ENCODE measurements at regions of chr9 and their contacts with region 1.

Region 1: DNA sequence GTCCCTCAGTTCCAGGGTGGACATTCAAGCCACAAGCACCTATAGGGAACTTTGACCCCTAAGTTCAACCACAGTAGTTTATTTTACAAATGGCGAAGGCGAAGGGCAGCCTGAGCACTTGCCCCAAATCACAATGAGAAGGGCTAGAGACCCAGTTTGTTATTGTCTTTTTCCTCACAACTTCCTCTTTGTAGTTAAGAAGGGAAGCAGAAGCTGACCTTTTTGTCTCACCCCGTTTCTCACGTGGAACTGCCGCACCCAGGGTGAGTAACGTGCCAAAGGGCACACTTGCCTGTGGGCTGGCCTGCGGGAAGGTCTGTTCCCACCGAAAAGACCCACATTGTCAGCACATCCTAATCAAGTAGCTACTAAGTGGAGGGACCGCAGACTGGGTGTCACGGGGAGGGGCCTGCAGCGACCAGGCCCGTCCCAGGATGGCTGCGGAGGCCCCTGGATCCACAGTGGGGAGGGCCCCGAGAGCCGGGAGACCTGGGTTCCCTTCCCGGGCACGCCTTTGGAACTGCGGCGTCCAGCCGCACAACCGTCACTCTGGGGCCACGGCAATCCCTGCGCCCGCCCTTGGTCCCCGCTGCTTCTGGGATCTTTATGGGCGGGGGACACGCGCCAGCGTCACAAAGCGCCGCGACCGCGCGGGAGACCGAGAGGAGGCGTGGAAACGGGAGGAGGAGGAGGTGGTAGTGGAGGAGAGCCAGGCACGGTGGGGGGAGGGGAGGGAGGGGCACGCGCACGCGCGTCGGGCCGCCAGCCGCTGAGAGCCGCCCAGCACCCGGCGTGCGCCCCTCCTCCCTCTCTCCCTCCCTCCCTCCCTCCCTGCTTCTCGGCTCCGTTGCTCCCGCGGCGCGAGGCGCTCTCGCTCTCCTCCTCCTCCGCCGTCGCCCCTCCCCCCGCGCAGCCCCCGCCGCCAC is at the start of gene UBE2R2:
- DNase-seq: peak; percentile 85 to 99 (median 90)

Region 2: DNA sequence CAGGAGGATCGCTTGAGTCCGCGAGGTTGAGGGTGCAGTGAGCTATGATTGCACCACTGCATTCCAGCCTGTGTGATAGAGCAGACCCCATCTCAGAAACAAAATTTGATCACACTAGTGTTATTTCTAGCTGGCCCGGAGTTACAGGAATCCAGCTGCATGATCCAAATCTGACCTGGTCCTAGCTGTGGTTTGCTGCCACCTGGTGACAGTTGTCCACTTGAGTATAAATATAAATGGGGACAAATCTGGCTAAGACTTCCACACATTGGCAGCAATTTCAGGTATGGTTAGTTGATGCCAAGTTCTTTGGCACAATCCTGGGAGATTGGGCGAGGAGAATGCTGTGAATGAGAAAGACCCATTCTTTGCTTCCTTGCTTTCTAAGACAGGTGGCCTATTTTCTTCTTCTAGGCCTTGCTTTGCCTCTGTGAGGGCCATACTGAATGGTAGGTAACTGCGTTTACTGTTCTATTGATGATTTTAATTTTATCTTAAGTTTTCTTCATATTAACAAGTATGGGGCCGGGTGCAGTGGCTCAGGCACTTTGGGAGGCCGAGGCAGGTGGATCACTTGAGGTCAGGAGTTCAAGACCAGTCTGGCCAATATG is 35.7 kb after region 1 on chr9:
- intact Hi-C with region 1: loop called (anchors 1 kb)
- DNase-seq: peak in 7 of 10 donors; percentile 55 to 94 (median 72)

Region 3: GRCh38 chr9:33924978-33925797 is 108.6 kb after region 1 on chr9:
- intact Hi-C with region 1: loop called (anchors 10 kb)
- DNase-seq: peak in 8 of 10 donors; percentile 31 to 90 (median 62)

Region 4: GRCh38 chr9:34048923-34049697 is 232.5 kb after region 1 on chr9:
- intact Hi-C with region 1: loop called (anchors 10 kb)
- DNase-seq: peak; percentile 96 to 100 (median 99)

Measured in posterior cingulate gyrus (tissue), 11 donors.